ENCODE measurements at regions of chr10 and their contacts with region 1.

Region 1: GRCh38 chr10:128011175-128011979 is 104.5 kb downstream of the PTPRE start:
- H3K4me3 ChIP-seq: no peak overlapping the region
- H3K27ac ChIP-seq: no peak overlapping the region
- H3K4me1 ChIP-seq: no peaks in the 10 kb centered on the region
- CTCF ChIP-seq: peak; percentile 92

Region 2: DNA sequence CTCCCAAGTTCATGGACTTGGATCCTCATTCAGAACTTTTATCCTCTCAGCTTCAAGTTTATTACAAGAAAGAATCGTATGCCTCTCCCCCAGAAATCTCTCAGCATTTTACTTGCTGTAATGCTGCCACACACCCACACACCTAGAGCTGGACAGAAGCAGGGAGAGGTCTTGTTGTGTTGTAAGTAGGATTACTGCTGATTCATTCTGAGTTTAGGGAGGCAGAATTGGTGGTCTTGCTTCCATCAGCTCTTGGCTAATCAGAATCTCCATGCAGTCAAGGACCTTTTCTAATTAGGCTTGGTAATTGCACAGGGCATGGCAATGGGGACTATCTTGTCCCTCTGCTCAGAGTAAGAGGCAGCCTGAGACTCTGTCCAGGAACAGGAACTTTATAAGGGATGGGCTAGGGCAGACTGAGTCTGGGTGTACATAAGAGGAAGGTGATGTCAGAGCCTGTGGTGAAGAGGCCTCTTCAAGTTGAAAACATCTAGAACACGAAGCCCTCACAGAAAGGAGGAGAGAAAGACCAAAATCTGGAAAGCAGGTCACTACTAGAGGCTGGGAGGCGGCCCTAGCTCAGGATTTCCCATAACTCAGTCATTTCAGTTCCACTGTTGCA is 111.5 kb before region 1 on chr10:
- CTCF ChIA-PET with region 1: interaction called, 154 read pairs
- POLR2A ChIA-PET with region 1: no interaction called
- H3K4me3 ChIP-seq: no peak overlapping the region
- H3K27ac ChIP-seq: no peak overlapping the region
- H3K4me1 ChIP-seq: no peaks in the 10 kb centered on the region
- CTCF ChIP-seq: no peak

Region 3: DNA sequence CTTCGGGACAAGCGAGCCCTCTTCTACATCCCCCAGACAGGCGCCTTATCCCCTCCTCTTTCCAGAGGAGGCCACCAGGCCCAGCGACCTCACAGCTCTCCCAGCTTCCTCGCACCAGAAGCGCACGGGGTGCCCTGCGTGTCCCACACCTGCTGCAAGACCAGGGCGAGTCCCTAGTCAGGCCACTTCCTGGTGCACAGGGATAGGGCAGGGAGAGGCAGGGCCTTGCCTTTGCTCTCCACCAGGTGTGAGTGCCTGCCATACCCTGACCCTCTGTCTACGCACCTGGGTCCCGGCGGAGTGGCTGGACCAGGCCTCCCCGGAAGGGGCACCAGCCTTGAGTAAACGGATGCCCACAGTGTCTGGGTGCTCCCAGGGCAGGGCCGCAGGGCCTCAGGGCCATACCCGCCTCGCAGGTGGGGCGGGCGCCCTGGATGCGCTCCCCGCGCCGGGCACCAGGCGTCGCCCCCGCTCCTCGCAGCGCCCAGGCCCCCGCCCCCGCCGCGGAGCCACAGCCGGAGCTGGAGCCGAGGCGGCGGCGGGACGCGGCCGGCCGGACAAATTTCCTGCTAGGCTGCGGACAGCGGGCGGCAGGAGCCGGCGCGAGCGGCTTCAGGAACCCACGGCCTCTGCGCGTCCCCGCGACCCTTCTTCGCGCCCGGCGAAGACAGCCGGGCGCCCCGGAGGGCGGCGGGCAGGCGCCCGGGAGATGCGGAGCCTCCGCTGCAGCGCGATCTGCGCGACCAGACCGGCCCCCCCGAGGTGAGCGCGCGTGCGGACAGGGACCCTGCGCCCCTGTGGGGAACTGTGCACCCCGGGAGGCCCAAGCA is 104.6 kb before region 1 on chr10 and contains the start of gene PTPRE:
- CTCF ChIA-PET with region 1: interaction called, 154 read pairs
- POLR2A ChIA-PET with region 1: interaction called, 3 read pairs
- H3K4me3 ChIP-seq: peak within 1 kb of the TSS; percentile 49
- H3K27ac ChIP-seq: no peak within 1 kb of the TSS; the same call in 1 of the 2 replicates
- H3K4me1 ChIP-seq: no peaks in the 10 kb centered on the region
- CTCF ChIP-seq: peak; percentile 61

Region 4: GRCh38 chr10:127990846-127991542 is 20.4 kb before region 1 on chr10:
- CTCF ChIA-PET with region 1: interaction called, 15 read pairs
- POLR2A ChIA-PET with region 1: no interaction called
- H3K4me3 ChIP-seq: no peak overlapping the region
- H3K27ac ChIP-seq: no peak overlapping the region
- H3K4me1 ChIP-seq: peaks cover 16% of the 10 kb centered on the region
- CTCF ChIP-seq: no peak

Region 5: GRCh38 chr10:128035557-128035973 is 24.2 kb after region 1 on chr10:
- CTCF ChIA-PET with region 1: interaction called, 27 read pairs
- POLR2A ChIA-PET with region 1: no interaction called
- H3K4me3 ChIP-seq: no peak overlapping the region
- H3K27ac ChIP-seq: no peak overlapping the region
- H3K4me1 ChIP-seq: no peaks in the 10 kb centered on the region
- CTCF ChIP-seq: peak; percentile 32

Region 6: GRCh38 chr10:128069351-128070051 is 58.1 kb after region 1 on chr10:
- CTCF ChIA-PET with region 1: interaction called, 22 read pairs
- POLR2A ChIA-PET with region 1: no interaction called
- H3K4me3 ChIP-seq: no peak overlapping the region
- H3K27ac ChIP-seq: no peak overlapping the region
- H3K4me1 ChIP-seq: no peaks in the 10 kb centered on the region
- CTCF ChIP-seq: peak; percentile 62

Region 7: GRCh38 chr10:128077161-128077875 is 65.9 kb after region 1 on chr10:
- CTCF ChIA-PET with region 1: interaction called, 12 read pairs
- POLR2A ChIA-PET with region 1: no interaction called
- H3K4me3 ChIP-seq: no peak overlapping the region
- H3K27ac ChIP-seq: no peak overlapping the region
- H3K4me1 ChIP-seq: no peaks in the 10 kb centered on the region
- CTCF ChIP-seq: no peak

Region 8: GRCh38 chr10:128095027-128095752 is 83.8 kb after region 1 on chr10:
- CTCF ChIA-PET with region 1: no interaction called
- POLR2A ChIA-PET with region 1: no interaction called
- H3K4me3 ChIP-seq: no peak overlapping the region
- H3K27ac ChIP-seq: no peak overlapping the region
- H3K4me1 ChIP-seq: no peaks in the 10 kb centered on the region
- CTCF ChIP-seq: no peak